T-cell (primary cell): ENCODE measurements at regions of chr7 and their contacts with region 1.

Region 1: DNA sequence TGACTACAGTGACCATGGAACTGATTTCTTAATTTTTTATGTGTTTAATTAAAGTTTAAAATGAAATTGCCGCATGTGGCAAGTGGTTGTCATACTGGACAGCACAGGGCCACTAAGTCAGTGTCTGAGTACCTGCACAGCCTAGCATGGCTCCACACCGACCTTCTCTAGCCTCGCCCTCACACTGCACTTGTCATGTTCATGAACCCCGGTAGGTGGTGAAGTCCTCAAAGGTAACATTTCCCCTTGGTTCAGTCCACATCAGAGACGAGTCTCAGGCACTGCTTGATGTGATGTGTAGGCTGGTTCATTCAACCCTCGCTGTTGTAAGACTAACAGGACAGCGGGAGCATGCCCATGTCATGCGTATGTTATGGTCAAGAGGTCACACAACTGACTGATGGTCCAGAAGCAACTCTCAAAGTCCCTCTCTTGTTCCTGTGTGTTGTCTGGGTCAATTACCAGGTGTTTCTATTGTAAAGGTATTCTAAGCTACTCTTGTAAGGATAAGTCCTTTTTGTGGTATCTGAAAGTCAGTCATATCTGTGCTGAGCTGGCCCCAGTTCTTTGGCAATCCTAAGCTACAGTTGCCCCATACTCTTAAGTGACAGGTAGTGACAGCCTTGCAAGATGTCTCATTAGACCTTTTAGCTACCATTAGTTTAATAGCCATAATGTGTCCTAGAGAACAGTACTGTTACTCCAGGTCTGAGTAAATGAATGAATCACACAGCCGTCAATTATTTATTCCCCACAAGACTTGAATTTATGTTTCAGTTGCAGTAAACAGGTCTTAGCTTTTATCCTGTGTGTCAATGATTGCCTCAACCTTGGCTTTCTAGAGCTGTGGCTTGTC is 32.9 kb upstream of the ZC3HAV1L start:
- DNase-seq: peak in 4 of 35 experiments; percentile 10 to 34 (median 26)
- ATAC-seq: peak in 3 of 4 experiments; percentile 36 to 51 (median 43)
- H3K4me3 ChIP-seq: no peak overlapping the region
- H3K4me3 Mint-ChIP-seq: no peak overlapping the region
- H3K27ac ChIP-seq: peak overlapping the region; percentile 3
- H3K27ac Mint-ChIP-seq: peak overlapping the region; percentile 11 to 36
- H3K4me1 ChIP-seq: peaks cover 9 to 37% of the 10 kb centered on the region in 2 experiments
- H3K4me1 Mint-ChIP-seq: peaks cover 66 to 79% (median 77%) of the 10 kb centered on the region in 3 donors
- H3K27me3 ChIP-seq: no peaks in the 10 kb centered on the region
- H3K27me3 Mint-ChIP-seq: no peaks in the 10 kb centered on the region

Region 2: GRCh38 chr7:138948108-138948802 is 120.5 kb before region 1 on chr7:
- CTCF ChIA-PET with region 1: no interaction called
- POLR2A ChIA-PET with region 1: no interaction called
- DNase-seq: no peak
- ATAC-seq: no peak
- H3K4me3 ChIP-seq: no peak overlapping the region
- H3K4me3 Mint-ChIP-seq: no peak overlapping the region
- H3K27ac ChIP-seq: no peak overlapping the region
- H3K27ac Mint-ChIP-seq: no peak overlapping the region
- H3K4me1 ChIP-seq: no peaks in the 10 kb centered on the region
- H3K4me1 Mint-ChIP-seq: no peaks in the 10 kb centered on the region
- H3K27me3 ChIP-seq: peaks cover 0 to 8% of the 10 kb centered on the region in 2 experiments
- H3K27me3 Mint-ChIP-seq: peaks cover 8 to 15% of the 10 kb centered on the region in 2 donors

Region 3: GRCh38 chr7:139051655-139052054 is 17.1 kb before region 1 on chr7:
- CTCF ChIA-PET with region 1: interaction called, 3 to 4 read pairs
- POLR2A ChIA-PET with region 1: interaction called, 3 to 17 read pairs
- DNase-seq: no peak
- ATAC-seq: no peak
- H3K4me3 ChIP-seq: no peak overlapping the region
- H3K4me3 Mint-ChIP-seq: no peak overlapping the region
- H3K27ac ChIP-seq: peak overlapping the region; percentile 6
- H3K27ac Mint-ChIP-seq: peak overlapping the region in 1 of 2 donors; percentile 75
- H3K4me1 ChIP-seq: peaks cover 0 to 2% of the 10 kb centered on the region in 2 experiments
- H3K4me1 Mint-ChIP-seq: peaks cover 28 to 44% (median 41%) of the 10 kb centered on the region in 3 donors
- H3K27me3 ChIP-seq: no peaks in the 10 kb centered on the region
- H3K27me3 Mint-ChIP-seq: no peaks in the 10 kb centered on the region

Region 4: DNA sequence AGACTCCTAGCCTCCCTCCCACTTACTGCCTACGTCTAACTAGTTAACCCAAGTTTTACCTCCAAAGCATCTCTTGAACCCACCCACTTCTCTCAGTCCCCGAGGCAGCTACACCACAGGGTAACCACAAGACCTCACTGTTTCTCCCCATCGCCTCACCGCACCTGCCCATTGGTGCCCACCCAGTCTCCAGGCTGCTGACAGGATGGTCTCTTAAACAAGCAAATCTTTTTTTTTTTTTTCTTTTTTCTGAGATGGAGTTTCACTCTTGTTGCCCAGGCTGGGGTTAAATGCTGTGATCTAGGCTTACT is 1524.9 kb after region 1 on chr7:
- CTCF ChIA-PET with region 1: no interaction called
- POLR2A ChIA-PET with region 1: no interaction called
- DNase-seq: no peak
- ATAC-seq: no peak
- H3K4me3 ChIP-seq: no peak overlapping the region
- H3K4me3 Mint-ChIP-seq: no peak overlapping the region
- H3K27ac ChIP-seq: no peak overlapping the region
- H3K27ac Mint-ChIP-seq: no peak overlapping the region
- H3K4me1 ChIP-seq: no peaks in the 10 kb centered on the region
- H3K4me1 Mint-ChIP-seq: peaks cover 0 to 9% (median 5%) of the 10 kb centered on the region in 3 donors
- H3K27me3 ChIP-seq: peaks cover 0 to 16% of the 10 kb centered on the region in 2 experiments
- H3K27me3 Mint-ChIP-seq: peaks cover 9 to 18% of the 10 kb centered on the region in 2 donors